Left cardiac atrium (tissue), 4 donors: ENCODE measurements at regions of chr15 and their contacts with region 1.

Region 1: GRCh38 chr15:76235186-76235826 is 76.0 kb downstream of the ETFA start:
- DNase-seq: no peak
- ATAC-seq: peak; percentile 70 to 78

Region 2: GRCh38 chr15:75606711-75607699 is 628.3 kb before region 1 on chr15:
- intact Hi-C with region 1: no loop called
- DNase-seq: no peak
- ATAC-seq: no peak

Region 3: DNA sequence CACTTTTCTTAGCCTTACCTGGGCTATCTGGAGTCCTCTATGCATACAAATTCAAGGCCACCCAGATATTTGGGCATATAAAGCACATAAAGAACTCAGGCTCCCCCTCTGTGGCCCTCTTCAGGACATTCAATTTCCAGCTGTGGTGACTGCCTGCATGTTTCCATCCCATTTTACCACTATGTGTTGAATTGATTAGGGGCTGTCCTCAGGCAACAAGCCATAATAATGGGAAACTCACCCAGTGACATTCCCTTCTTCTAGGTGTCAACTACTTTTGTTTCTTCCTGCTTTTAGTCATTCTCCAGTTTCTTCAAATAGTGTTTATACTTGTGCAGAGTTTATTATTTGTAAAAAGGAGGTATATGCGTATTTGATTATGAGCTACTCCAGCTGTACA is 241.1 kb before region 1 on chr15:
- intact Hi-C with region 1: no loop called
- DNase-seq: no peak
- ATAC-seq: no peak

Region 4: GRCh38 chr15:76312540-76313174 is 77.4 kb after region 1 on chr15:
- intact Hi-C with region 1: no loop called
- DNase-seq: no peak
- ATAC-seq: no peak

Region 5: DNA sequence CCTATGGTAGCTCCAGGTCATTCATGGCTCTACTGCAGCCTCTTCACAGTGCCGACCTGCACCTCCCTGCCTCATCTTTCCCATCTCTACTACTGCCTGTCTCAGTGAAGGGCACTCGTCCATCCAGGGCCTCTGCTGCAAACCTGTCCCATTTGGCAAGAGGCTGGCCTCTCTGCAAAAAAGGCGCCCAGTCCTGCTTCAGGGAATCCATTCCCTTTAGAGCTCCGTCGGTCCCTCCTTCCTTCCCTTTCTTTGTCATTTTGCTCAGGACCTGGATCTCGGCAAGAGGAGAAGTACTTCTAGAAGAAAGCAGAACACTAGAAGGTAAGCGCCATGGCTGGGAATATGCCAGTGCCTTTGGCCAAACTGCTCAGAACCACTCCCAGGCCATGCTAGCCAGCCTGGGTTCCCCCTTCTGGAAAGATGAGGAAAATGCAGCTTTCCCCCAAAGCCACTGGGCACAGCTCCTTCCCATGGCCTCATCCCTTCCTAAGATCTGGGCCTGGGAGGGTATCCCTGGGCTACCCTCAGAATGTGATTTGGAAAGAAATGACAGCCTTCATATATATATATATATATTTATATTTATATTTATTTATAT is 94.9 kb after region 1 on chr15:
- intact Hi-C with region 1: loop called in 1 of 2 experiments (anchors 5 kb)
- DNase-seq: peak; percentile 60
- ATAC-seq: peak; percentile 83 to 86

Region 6: GRCh38 chr15:76866716-76867321 is 631.5 kb after region 1 on chr15:
- intact Hi-C with region 1: loop called in 1 of 2 experiments (anchors 5 kb)
- DNase-seq: no peak
- ATAC-seq: peak in 1 of 2 donors; percentile 58